Dorsolateral prefrontal cortex (tissue), 120 donors: ENCODE measurements at regions of chr2 and their contacts with region 1.

Region 1: DNA sequence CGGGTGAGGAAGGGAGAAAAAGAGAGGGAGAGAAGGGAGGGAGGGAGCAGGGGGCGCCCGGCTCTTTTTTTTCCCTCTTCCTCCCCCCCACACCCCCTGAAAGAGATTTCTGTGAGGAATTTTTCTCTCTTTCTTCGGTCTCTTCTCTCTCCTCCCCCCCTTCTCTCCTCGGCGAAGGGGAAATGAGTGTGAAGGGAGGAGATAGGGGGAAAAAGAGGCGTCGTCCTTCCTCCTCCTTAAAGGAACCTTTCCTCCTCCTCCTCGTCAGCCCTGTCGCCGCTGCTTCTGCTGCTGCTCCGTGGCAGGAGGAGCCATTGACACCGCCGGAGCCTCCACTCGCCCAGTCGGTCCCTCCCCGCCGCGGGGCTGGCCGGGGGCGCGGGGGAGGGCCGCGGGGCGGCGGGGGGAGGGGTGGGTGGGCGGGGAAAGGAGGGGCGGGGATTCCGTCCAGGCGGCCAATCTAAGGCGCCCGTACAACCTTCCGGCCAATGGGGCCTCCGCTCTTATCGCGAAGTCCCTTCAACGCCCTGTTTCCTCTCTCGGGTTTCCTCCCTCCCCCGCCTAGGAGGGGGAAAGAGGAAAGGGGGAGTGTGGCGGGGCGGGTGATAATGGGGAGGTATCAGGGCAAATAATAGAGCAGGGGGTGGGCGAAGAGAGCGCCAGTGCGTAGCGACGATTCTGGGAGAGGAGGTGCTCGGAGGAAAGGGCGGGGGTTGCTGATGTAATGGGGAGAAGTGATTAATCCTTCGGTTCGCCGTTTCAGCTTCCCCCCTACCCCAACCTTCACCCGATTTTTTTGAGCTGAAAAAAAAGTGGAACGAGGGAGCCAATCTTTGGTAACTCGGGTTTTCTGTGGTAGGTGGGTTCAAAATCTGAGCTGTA is at the start of gene FBXO11:
- DNase-seq: peak; percentile 90 to 96 (median 95)
- H3K4me3 ChIP-seq: peak within 1 kb of the TSS; percentile 46 to 96 (median 88)
- H3K27ac ChIP-seq: peak within 1 kb of the TSS; percentile 86 to 100 (median 99)
- H3K27me3 ChIP-seq: no peaks in the 10 kb centered on the region
- CTCF ChIP-seq: peak in 45 of 56 donors; percentile 38 to 79 (median 67)
- total RNA-seq, gene FBXO11: 70.0 to 130 (median 103) TPM

Region 2: GRCh38 chr2:47437287-47437686 is 469.1 kb before region 1 on chr2:
- intact Hi-C with region 1: loop called in 1 of 2 experiments (anchors 10 kb)
- DNase-seq: peak in 1 of 10 donors; percentile 18
- H3K4me3 ChIP-seq: peak overlapping the region in 17 of 59 donors; percentile 1 to 36 (median 18)
- H3K27ac ChIP-seq: peak overlapping the region in 1 of 59 donors; percentile 12
- H3K27me3 ChIP-seq: no peaks in the 10 kb centered on the region
- CTCF ChIP-seq: peak; percentile 13 to 88 (median 67)

Region 3: DNA sequence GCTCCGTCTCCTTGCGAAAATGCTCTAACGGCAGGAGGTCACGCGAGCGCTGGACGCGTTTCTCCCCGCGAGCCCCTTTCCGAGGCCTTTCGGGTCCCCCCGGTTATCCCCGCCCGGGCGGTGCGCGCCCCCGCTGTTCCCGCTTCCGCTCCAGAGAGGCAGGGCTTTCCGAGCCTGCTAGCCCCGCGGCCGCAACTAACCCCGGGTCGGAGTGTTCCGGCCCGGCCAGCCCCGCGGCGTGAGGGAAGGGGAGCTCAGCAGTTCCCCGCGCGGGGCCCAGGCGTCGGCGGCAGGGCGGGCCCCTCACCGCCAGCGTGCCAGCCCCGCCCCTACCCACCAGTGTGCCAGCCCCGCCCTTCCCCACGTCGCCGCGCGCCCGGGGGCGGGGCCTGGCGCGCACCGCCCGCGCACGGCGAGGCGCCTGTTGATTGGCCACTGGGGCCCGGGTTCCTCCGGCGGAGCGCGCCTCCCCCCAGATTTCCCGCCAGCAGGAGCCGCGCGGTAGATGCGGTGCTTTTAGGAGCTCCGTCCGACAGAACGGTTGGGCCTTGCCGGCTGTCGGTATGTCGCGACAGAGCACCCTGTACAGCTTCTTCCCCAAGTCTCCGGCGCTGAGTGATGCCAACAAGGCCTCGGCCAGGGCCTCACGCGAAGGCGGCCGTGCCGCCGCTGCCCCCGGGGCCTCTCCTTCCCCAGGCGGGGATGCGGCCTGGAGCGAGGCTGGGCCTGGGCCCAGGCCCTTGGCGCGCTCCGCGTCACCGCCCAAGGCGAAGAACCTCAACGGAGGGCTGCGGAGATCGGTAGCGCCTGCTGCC is 123.5 kb before region 1 on chr2 and contains the start of gene MSH6:
- intact Hi-C with region 1: loop called (anchors 2 to 5 kb)
- DNase-seq: peak; percentile 79 to 96 (median 90)
- H3K4me3 ChIP-seq: peak within 1 kb of the TSS; percentile 71 to 98 (median 92)
- H3K27ac ChIP-seq: peak within 1 kb of the TSS; percentile 64 to 97 (median 91)
- H3K27me3 ChIP-seq: no peaks in the 10 kb centered on the region
- CTCF ChIP-seq: peak in 26 of 56 donors; percentile 5 to 57 (median 31)
- total RNA-seq, gene MSH6: 21.9 to 64.7 (median 36.1) TPM

Region 4: DNA sequence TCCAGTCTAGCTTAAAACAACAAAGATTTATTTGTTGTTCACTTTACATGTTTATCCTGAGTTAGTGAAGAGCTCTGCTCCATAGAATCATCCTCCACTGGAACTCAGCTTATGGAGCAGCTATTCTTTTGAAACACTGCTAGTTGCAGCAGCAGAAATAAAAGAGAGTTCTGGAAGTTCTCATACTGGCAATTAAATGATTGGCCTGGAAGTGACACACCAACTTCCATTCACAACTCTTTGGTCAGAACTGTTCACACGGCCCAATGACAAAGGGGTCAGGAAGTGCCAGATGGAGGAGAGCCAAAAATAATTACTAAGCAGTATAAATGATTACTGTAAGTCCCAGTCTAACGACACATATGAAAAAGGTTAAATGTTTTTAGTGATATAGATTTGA is 39.2 kb before region 1 on chr2:
- intact Hi-C with region 1: loop called in 1 of 2 experiments (anchors 5 kb)
- DNase-seq: no peak
- H3K4me3 ChIP-seq: no peak overlapping the region
- H3K27ac ChIP-seq: peak overlapping the region in 53 of 59 donors; percentile 2 to 90 (median 65)
- H3K27me3 ChIP-seq: no peaks in the 10 kb centered on the region
- CTCF ChIP-seq: no peak

Region 5: GRCh38 chr2:48107326-48107925 is 201.0 kb after region 1 on chr2:
- intact Hi-C with region 1: loop called (anchors 2 kb)
- DNase-seq: no peak
- H3K4me3 ChIP-seq: peak overlapping the region in 8 of 59 donors; percentile 42 to 58 (median 52)
- H3K27ac ChIP-seq: peak overlapping the region in 46 of 59 donors; percentile 9 to 92 (median 66)
- H3K27me3 ChIP-seq: no peaks in the 10 kb centered on the region
- CTCF ChIP-seq: peak in 1 of 56 donors; percentile 8

Region 6: GRCh38 chr2:48205137-48205798 is 298.9 kb after region 1 on chr2:
- intact Hi-C with region 1: loop called in 1 of 2 experiments (anchors 10 kb)
- DNase-seq: peak in 8 of 10 donors; percentile 59 to 88 (median 71)
- H3K4me3 ChIP-seq: peak overlapping the region in 53 of 59 donors; percentile 7 to 62 (median 40)
- H3K27ac ChIP-seq: peak overlapping the region; percentile 53 to 98 (median 93)
- H3K27me3 ChIP-seq: no peaks in the 10 kb centered on the region
- CTCF ChIP-seq: peak in 49 of 56 donors; percentile 13 to 72 (median 45)

Region 7: DNA sequence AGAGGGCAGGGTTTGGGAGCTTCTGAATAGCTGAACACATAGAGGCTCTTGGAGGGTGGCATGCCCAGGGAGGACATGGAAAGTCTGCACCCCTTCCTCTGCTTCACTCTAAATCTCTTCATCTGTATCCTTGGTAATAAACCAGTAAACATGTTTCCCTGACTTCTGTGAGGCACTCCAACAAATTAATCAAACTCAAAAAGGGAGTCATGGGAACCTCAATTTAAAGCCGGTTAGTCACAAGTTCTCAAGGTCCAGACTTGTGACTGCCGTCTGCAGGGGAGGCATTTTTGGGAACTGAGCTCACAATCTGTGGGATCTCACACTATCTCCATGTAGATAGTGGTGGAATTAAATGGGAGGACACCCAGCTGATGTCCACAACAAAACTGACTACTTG is 590.5 kb after region 1 on chr2:
- intact Hi-C with region 1: no loop called
- DNase-seq: no peak
- H3K4me3 ChIP-seq: no peak overlapping the region
- H3K27ac ChIP-seq: no peak overlapping the region
- H3K27me3 ChIP-seq: no peaks in the 10 kb centered on the region
- CTCF ChIP-seq: no peak